GM12878 (cell line): ENCODE measurements at regions of chr10 and their contacts with region 1.

Region 1: GRCh38 chr10:80924063-80924952 is 386.6 kb downstream of the SH2D4B start:
- DNase-seq: no peak
- ATAC-seq: peak; percentile 81
- H3K4me3 ChIP-seq: no peak overlapping the region
- H3K27ac ChIP-seq: no peak overlapping the region
- H3K4me1 ChIP-seq: no peaks in the 10 kb centered on the region
- H3K27me3 ChIP-seq: no peaks in the 10 kb centered on the region
- CTCF ChIP-seq: peak; percentile 55 to 69 (median 60)
- EP300 ChIP-seq: no peak
- POLR2A ChIP-seq: no peak
- RAD21 ChIP-seq: peak; percentile 57

Region 2: DNA sequence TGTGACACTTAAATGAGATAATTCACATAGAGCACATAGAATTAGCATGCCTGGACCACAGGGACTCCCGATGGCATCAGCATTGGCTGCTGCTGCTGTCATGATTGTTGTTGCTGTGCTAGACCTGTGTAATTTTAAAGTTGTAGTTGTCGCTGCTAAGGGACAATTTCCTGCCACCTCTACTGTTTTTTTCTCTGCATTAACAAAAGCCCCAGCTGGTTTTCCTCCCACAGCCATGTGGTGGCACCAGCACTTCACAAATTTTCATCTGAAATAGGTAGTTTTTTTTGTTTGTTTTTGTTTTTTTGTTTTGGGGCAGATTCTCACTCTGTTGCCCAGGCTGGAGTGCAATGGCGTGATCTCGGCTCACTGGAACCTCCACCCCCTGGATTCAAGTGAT is 541.3 kb before region 1 on chr10:
- CTCF ChIA-PET with region 1: interaction called, 3 read pairs
- POLR2A ChIA-PET with region 1: no interaction called
- RAD21 ChIA-PET with region 1: no interaction called
- SMC1A ChIA-PET with region 1: no interaction called
- in situ Hi-C with region 1: no loop called
- intact Hi-C with region 1: loop called (anchors 5 kb)
- DNase-seq: peak; percentile 19
- ATAC-seq: peak; percentile 65
- H3K4me3 ChIP-seq: no peak overlapping the region
- H3K27ac ChIP-seq: no peak overlapping the region
- H3K4me1 ChIP-seq: no peaks in the 10 kb centered on the region
- H3K27me3 ChIP-seq: peaks cover 0 to 3% of the 10 kb centered on the region in 2 experiments; a peak in 1 of 4 replicates
- CTCF ChIP-seq: peak; percentile 52 to 68 (median 66)
- EP300 ChIP-seq: no peak
- POLR2A ChIP-seq: no peak
- RAD21 ChIP-seq: peak; percentile 72

Region 3: GRCh38 chr10:80713398-80713928 is 210.8 kb before region 1 on chr10:
- CTCF ChIA-PET with region 1: no interaction called
- POLR2A ChIA-PET with region 1: no interaction called
- RAD21 ChIA-PET with region 1: no interaction called
- SMC1A ChIA-PET with region 1: no interaction called
- in situ Hi-C with region 1: no loop called
- intact Hi-C with region 1: no loop called
- DNase-seq: no peak
- ATAC-seq: no peak
- H3K4me3 ChIP-seq: no peak overlapping the region
- H3K27ac ChIP-seq: no peak overlapping the region
- H3K4me1 ChIP-seq: no peaks in the 10 kb centered on the region
- H3K27me3 ChIP-seq: no peaks in the 10 kb centered on the region
- CTCF ChIP-seq: no peak
- EP300 ChIP-seq: no peak
- POLR2A ChIP-seq: no peak
- RAD21 ChIP-seq: no peak

Region 4: DNA sequence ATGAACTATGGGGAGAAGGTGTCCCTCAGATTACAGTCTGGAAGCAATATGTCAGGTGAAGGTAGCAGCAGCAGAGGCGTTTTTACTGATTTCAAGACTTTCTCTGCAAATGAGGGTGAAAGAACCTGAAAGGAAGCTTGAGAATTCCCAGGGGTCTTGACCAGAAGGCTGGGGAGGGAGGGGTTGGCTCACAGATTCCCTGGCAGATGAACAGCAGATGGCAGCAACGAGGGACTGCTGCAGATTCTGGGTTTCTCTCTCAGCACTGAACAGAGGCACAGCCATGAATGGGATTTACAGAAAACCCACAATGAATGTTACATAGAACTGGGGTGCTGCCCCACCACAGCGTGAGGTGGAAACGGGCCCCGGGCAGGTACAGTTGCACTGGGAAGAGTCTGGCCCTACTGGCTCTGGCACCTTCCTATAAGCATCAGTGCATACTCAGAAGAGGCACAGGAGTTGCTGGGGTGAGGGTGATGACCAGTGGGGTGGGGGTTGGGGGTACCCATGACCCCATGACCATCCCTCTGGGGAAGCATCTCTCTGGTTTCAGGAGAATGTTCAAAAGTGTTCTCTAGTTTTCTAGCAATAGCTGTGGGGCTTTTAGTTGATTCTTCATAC is 68.8 kb before region 1 on chr10:
- CTCF ChIA-PET with region 1: interaction called, 97 read pairs
- POLR2A ChIA-PET with region 1: no interaction called
- RAD21 ChIA-PET with region 1: interaction called, 30 read pairs
- SMC1A ChIA-PET with region 1: interaction called, 50 read pairs
- in situ Hi-C with region 1: no loop called
- intact Hi-C with region 1: loop called (anchors 1 kb)
- DNase-seq: peak; percentile 13
- ATAC-seq: peak; percentile 92
- H3K4me3 ChIP-seq: no peak overlapping the region
- H3K27ac ChIP-seq: no peak overlapping the region
- H3K4me1 ChIP-seq: no peaks in the 10 kb centered on the region
- H3K27me3 ChIP-seq: peaks cover 0 to 2% of the 10 kb centered on the region in 2 experiments; a peak in 1 of 4 replicates
- CTCF ChIP-seq: peak; percentile 48 to 72 (median 67); a peak in 5 of 6 replicates
- EP300 ChIP-seq: no peak
- POLR2A ChIP-seq: no peak
- RAD21 ChIP-seq: peak; percentile 49

Region 5: GRCh38 chr10:80894797-80895467 is 29.4 kb before region 1 on chr10:
- CTCF ChIA-PET with region 1: interaction called, 11 read pairs
- POLR2A ChIA-PET with region 1: no interaction called
- RAD21 ChIA-PET with region 1: no interaction called
- SMC1A ChIA-PET with region 1: interaction called, 4 read pairs
- in situ Hi-C with region 1: no loop called
- intact Hi-C with region 1: no loop called
- DNase-seq: no peak
- ATAC-seq: no peak
- H3K4me3 ChIP-seq: no peak overlapping the region
- H3K27ac ChIP-seq: no peak overlapping the region
- H3K4me1 ChIP-seq: no peaks in the 10 kb centered on the region
- H3K27me3 ChIP-seq: no peaks in the 10 kb centered on the region
- CTCF ChIP-seq: no peak
- EP300 ChIP-seq: no peak
- POLR2A ChIP-seq: no peak
- RAD21 ChIP-seq: no peak

Region 6: DNA sequence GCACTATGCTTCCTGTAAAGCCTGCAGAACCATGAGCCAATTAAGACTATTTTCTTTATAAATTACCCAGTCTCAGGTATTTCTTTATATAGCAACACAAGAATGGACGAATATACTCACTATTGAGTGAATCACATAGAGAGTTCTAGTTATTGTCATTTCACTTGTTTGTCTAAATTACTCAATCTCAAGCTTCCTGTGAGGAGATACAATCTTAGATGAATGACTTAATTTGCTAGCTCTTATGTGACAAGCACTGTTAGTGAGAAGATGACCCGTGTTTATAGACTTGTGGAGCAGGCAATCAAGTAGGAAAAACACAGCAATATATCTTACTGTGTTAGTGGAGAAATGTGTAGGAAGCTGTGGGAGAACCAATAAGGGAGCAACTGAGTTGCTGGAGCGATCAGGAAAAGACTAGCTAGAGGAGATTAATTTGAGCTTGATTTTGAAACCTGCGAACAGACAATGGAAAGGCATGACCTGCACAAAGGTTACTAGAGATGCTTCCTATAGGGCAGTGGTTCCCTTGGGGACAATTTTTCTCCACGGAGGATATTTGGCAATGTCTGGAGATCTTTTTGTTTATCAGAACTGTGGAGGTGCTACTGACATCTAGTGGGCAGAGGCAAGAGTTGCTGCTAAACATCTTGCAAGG is 94.5 kb after region 1 on chr10:
- CTCF ChIA-PET with region 1: interaction called, 54 read pairs
- POLR2A ChIA-PET with region 1: no interaction called
- RAD21 ChIA-PET with region 1: interaction called, 8 read pairs
- SMC1A ChIA-PET with region 1: interaction called, 26 read pairs
- in situ Hi-C with region 1: no loop called
- intact Hi-C with region 1: loop called (anchors 2 kb)
- DNase-seq: no peak
- ATAC-seq: peak; percentile 88
- H3K4me3 ChIP-seq: no peak overlapping the region
- H3K27ac ChIP-seq: no peak overlapping the region
- H3K4me1 ChIP-seq: no peaks in the 10 kb centered on the region; the same call in 1 of the 2 replicates
- H3K27me3 ChIP-seq: no peaks in the 10 kb centered on the region
- CTCF ChIP-seq: peak; percentile 72 to 80 (median 73)
- EP300 ChIP-seq: no peak
- POLR2A ChIP-seq: no peak
- RAD21 ChIP-seq: peak; percentile 78